Common myeloid progenitor, CD34-positive (primary cell): ENCODE measurements at regions of chr1 and their contacts with region 1.

Region 1: DNA sequence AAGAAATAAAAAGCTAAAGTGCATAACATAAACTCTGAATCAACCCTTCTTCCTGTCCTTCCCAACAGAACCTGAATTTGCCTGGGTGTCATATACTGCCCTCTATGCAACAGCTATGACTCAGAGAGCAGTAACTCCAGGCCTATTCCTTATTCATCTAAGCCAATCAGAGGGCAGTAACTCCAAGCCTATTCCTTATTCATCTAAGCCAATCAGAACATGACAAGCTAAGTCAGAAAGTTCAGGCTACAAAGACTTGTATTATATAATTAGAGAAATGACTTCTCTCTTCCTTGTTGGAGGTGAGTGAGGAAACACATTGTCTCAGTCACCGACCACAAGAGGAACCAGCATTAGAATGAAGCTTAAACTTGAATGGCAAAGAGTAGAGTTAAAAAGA is 26.2 kb upstream of the TADA1 start:
- DNase-seq: peak; percentile 76 to 95 (median 91)
- H3K4me3 ChIP-seq: no peak overlapping the region
- H3K27ac ChIP-seq: peak overlapping the region in 1 of 2 experiments; percentile 14
- H3K4me1 ChIP-seq: peaks cover 1 to 30% (median 13%) of the 10 kb centered on the region in 4 experiments
- H3K27me3 ChIP-seq: no peaks in the 10 kb centered on the region

Region 2: DNA sequence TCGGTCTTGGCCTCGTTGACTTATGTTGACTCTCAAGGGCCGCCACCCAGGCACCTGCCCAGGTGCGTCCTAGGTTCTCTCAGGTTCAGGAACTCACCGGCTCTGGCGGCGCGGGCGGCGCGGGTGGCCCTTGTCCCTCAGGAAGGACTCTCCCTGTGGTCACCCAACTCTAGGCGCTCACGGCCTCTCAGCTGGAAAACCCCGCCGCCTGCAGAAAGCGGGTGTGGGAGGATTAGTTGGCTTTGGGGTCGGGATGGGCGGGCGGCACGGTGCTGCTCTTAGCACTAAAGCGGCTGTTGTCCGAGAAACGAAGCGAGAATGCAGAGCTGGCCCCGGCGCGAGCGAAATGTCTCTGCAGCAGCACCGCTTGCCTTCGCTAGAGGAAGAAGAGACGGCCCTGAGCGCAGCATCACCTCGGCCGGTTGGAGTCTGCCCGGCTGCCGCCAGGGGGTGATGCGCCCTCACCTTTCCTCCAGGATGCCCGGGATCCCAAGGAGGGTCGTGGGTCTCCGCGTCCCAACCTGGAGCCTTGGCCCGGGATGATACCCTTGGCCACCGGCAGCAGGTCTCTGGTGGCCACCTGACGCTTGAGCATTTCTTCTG is 18.1 kb before region 1 on chr1:
- CTCF ChIA-PET with region 1: interaction called, 42 read pairs
- POLR2A ChIA-PET with region 1: no interaction called
- DNase-seq: peak; percentile 52 to 66 (median 63)
- H3K4me3 ChIP-seq: peak overlapping the region in 3 of 7 experiments; percentile 45 to 70 (median 57)
- H3K27ac ChIP-seq: no peak overlapping the region
- H3K4me1 ChIP-seq: peaks cover 0 to 17% (median 14%) of the 10 kb centered on the region in 4 experiments
- H3K27me3 ChIP-seq: peaks cover 0 to 6% (median 0%) of the 10 kb centered on the region in 5 experiments

Region 3: GRCh38 chr1:167022384-167022783 is 120.1 kb after region 1 on chr1:
- CTCF ChIA-PET with region 1: no interaction called
- POLR2A ChIA-PET with region 1: no interaction called
- DNase-seq: no peak
- H3K4me3 ChIP-seq: no peak overlapping the region
- H3K27ac ChIP-seq: no peak overlapping the region
- H3K4me1 ChIP-seq: no peaks in the 10 kb centered on the region
- H3K27me3 ChIP-seq: no peaks in the 10 kb centered on the region